Keratinocyte (primary cell): ENCODE measurements at regions of chr9 and their contacts with region 1.

Region 1: DNA sequence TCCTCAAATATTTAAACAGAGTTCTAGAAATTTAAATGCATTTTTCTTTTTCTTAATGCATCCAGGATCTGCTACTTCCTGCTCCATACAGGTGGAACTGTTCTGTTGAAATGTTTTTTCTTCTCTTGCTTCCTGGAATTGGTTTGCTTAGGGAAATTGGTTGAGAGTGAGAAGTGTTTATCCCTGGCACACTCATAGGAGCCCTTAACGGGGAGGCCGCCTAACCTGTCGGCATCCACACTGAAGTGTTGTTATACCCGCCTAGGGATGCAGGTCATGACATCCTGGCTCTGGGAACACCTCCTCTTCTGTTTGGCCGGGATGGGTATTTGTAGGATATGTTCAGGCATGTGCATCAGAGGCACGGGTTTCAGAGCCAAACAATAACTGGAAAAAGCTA is 239.7 kb downstream of the GADD45G start:
- DNase-seq: no peak
- H3K4me3 ChIP-seq: no peak overlapping the region
- H3K27ac ChIP-seq: no peak overlapping the region
- H3K4me1 ChIP-seq: no peaks in the 10 kb centered on the region
- H3K27me3 ChIP-seq: peaks cover 7% of the 10 kb centered on the region
- CTCF ChIP-seq: no peak

Region 2: GRCh38 chr9:89505911-89506310 is 338.6 kb before region 1 on chr9:
- dilution Hi-C with region 1: no loop called
- DNase-seq: no peak
- H3K4me3 ChIP-seq: no peak overlapping the region
- H3K27ac ChIP-seq: no peak overlapping the region
- H3K4me1 ChIP-seq: no peaks in the 10 kb centered on the region
- H3K27me3 ChIP-seq: peaks cover 4% of the 10 kb centered on the region
- CTCF ChIP-seq: no peak

Region 3: GRCh38 chr9:89750147-89750861 is 94.2 kb before region 1 on chr9:
- dilution Hi-C with region 1: no loop called
- DNase-seq: no peak
- H3K4me3 ChIP-seq: no peak overlapping the region
- H3K27ac ChIP-seq: no peak overlapping the region
- H3K4me1 ChIP-seq: no peaks in the 10 kb centered on the region
- H3K27me3 ChIP-seq: no peaks in the 10 kb centered on the region
- CTCF ChIP-seq: no peak

Region 4: DNA sequence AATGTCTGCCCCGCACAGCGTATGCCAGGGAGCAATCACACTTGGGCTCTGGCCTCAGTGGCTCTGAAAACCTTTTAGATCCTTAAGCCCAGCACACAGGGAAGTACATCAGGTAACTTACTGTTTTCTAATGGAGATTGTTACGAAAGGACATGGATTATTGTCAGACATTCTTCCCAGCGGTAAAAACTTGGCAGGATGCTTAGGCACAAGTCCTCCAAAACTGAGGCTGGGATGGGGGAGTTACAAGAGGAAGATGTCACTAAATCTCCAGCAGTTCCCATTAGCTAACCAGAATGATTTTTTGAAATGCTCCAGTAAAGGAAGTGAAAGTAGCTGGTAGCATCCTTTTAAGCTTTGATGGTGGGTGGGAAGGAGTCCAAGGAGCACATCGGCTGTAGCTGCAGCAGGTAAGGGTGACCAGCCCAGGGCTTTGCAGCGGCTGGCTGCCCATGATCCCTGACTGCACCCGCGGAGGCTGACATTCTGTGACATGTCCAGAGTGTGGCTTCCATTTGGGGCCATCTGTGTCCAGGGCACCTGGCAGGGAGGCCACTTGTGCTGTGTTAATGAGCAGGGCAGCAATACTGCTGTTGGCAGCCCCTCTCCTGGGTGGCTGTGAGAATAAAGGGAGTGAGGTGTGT is 73.9 kb before region 1 on chr9:
- dilution Hi-C with region 1: loop called (anchors 5 kb)
- DNase-seq: no peak
- H3K4me3 ChIP-seq: no peak overlapping the region
- H3K27ac ChIP-seq: no peak overlapping the region
- H3K4me1 ChIP-seq: no peaks in the 10 kb centered on the region
- H3K27me3 ChIP-seq: no peaks in the 10 kb centered on the region
- CTCF ChIP-seq: no peak

Region 5: DNA sequence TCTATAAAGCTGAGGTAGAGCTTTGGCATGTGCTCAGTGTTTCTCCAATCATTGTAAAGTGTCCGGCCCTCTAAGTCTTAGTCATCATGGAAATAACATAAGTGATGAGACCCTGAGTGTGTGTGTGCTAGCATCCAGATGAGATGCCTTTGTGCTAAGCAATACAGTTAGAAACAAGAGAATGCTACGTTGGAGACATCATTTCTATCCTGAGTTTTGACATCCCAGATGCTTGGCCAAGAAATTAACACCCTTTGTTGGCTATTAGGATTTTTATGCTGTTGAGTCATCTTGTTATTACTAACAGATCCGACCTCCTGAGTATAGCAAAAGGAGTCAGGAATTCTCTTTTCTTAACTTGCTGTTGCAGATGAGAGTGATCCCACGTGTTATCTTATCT is 268.3 kb after region 1 on chr9:
- dilution Hi-C with region 1: no loop called
- DNase-seq: no peak
- H3K4me3 ChIP-seq: no peak overlapping the region
- H3K27ac ChIP-seq: no peak overlapping the region
- H3K4me1 ChIP-seq: peaks cover 25% of the 10 kb centered on the region
- H3K27me3 ChIP-seq: no peaks in the 10 kb centered on the region
- CTCF ChIP-seq: no peak